ENCODE measurements at regions of chr5 and their contacts with region 1.

Region 1: GRCh38 chr5:59506285-59506877 is 387.1 kb downstream of the PDE4D start:
- DNase-seq: no peak
- H3K4me3 ChIP-seq: no peak overlapping the region
- CTCF ChIP-seq: no peak

Region 2: DNA sequence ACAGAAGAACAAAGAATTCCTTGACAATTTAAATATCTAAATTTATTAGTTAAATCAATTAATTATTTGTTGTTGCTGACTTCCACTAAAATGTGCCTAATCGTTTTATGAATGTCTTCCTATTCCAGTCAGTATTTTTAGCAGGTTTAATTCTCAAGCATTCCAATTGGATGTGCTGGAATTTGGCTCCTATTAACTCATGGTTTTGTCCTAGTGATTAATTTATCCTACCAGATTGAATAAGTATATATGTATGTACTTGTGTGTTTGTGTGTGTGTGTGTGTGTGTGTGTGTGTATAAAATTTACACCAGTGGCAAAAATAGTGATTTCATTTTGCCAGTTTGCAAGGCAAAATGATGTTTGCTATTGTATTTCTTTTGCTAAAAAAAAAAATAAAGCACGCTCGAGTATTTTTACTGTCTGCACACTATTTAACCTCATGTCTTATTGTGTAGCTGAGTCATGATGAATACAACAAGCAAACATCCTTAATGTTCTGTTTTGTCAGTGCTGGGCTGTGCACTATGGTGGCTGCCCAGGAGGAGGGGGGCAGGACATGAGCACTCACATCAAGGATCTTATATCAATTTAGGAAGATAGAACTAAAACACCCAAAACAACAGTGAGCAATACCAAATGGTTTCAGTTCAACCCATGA is 11.7 kb after region 1 on chr5:
- CTCF ChIA-PET with region 1: interaction called, 31 read pairs
- POLR2A ChIA-PET with region 1: no interaction called
- DNase-seq: peak; percentile 12
- H3K4me3 ChIP-seq: no peak overlapping the region
- CTCF ChIP-seq: no peak

Region 3: DNA sequence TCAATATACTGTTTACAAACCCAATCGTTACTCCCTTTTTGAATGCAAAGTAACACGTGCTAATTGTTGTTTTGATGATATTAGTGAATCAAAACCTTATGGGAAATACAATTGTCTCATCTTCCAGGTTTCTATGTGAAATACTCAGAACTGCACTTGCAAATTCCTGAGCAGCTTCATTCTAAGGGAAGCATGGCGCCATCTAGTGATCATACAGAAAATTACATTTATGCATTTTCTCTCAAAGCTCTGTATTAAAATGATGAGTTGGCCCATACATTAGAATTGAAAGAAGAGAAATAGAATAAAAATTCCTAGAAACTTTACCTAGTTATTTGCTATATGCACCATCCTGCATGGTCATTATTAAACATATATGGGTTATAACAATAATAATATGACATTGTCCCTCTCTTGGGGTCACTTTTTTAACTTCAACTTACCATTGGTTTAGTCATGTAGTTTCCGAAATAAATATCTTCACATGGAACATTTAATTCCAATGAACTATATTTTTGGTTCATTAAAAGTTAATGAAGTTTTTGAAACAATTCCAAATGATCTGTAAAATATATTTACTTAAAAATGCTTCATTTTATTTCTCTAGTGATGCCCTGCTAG is 167.2 kb after region 1 on chr5:
- CTCF ChIA-PET with region 1: interaction called, 136 read pairs
- POLR2A ChIA-PET with region 1: no interaction called
- DNase-seq: no peak
- H3K4me3 ChIP-seq: no peak overlapping the region
- CTCF ChIP-seq: peak; percentile 50

Region 4: DNA sequence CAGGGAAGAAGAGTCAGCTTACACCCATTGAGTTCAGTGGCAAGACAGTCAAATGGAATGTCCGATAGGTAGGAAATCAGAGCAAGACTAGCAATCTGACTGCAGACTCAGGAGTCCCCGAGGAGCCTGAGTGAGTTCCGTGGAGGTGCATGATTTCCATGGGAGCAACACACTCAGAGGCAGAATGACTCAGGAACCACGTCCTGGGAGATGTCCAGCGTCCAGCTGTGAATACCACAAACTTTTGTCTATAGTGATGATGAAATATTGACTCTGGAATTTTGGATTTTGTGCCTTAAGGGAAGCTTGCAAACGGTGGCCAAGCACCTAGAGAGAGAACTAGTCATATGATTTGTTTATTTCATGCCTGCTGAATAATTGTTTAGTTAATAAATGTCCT is 286.6 kb after region 1 on chr5:
- CTCF ChIA-PET with region 1: interaction called, 85 read pairs
- POLR2A ChIA-PET with region 1: no interaction called
- DNase-seq: peak; percentile 64
- H3K4me3 ChIP-seq: no peak overlapping the region
- CTCF ChIP-seq: no peak